Activated B cell treated with CpG ODN at 0.5 μM for 24 hours (primary cell): ENCODE measurements at regions of chr3 and their contacts with region 1.

Region 1: DNA sequence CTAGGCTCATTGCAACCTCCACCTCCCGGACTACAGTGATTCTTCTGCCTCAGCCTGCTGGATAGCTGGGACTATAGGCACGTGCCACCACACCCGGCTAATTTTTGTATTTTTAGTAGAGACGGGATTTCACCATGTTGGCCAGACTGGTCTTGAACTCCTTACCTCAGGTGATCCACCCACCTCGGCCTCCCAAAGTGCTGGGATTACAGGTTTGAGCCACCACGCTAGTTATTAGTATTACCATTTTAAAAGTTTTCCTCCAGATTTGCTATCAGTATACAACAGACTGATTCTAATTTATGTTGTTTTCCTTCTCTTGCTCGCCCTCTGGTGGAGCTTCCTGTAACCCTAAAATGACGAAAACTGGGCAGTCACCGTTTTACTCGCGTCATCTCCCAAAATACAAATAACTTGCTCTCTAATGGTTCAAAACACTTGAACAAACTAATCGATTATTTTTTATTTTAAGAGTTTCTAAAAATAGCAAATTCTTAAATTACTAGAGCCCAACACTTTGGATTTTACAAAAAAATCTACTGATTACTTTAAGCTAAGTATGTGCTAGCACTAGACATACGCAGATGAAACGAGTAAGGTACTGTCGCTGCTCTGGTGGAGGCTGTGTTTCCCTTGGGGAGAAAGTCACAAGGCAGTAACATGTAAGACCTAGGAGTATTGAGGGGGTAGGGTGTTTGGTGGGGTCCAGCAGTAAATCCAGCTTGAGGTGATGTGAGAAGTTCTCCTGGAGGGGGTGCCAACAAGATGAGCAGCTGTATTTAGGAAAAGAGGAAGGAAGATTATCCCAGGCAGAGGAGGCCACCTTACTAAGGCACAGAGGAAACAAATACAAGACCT is 203.3 kb downstream of the MBNL1 start:
- DNase-seq: peak; percentile 31
- ATAC-seq: peak; percentile 82
- H3K4me3 Mint-ChIP-seq: peak overlapping the region; percentile 78
- H3K27ac Mint-ChIP-seq: peak overlapping the region; percentile 65
- H3K4me1 Mint-ChIP-seq: peaks cover 26% of the 10 kb centered on the region
- H3K27me3 Mint-ChIP-seq: no peaks in the 10 kb centered on the region
- CTCF ChIP-seq: peak; percentile 17

Region 2: DNA sequence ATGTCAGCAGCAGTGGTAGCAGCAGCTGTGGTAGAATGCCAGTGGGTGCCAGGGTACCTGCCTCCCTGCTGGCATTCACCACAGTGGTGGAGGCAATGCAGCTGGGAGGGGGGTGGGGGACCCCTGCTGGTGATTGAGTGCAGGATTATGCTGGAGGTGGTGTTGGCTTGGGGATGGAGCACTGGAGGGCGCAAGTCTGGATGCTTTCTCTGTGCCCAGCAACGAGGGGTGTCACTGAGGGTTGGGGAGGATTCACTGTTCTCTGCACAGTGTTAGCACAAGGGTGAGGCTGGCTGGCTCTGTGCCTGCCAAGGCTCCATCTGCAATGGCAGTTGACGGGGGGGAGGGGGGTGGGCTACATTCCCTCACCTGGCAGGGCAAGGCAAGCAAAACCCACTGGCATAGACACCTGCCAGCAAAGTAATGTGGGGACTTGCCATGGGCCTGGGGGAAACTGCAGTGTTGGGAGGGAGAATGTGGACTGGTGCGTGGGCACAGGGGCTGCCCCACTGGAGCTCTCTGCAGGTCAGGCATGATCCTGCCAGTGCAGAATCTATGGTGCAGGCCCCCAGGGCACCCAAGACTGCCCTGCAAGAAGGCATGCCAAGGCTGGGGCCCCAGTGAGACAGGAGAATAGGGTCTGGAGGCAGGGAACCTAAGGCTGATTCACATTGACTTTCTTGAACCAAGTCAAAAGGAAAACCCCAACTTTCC is 1631.1 kb before region 1 on chr3:
- CTCF ChIA-PET with region 1: no interaction called
- POLR2A ChIA-PET with region 1: no interaction called
- intact Hi-C with region 1: no loop called
- DNase-seq: no peak
- ATAC-seq: no peak
- H3K4me3 Mint-ChIP-seq: no peak overlapping the region
- H3K27ac Mint-ChIP-seq: no peak overlapping the region
- H3K4me1 Mint-ChIP-seq: no peaks in the 10 kb centered on the region
- H3K27me3 Mint-ChIP-seq: peaks cover 17% of the 10 kb centered on the region
- CTCF ChIP-seq: no peak

Region 3: GRCh38 chr3:151439652-151440129 is 1032.4 kb before region 1 on chr3:
- CTCF ChIA-PET with region 1: interaction called, 3 read pairs
- POLR2A ChIA-PET with region 1: no interaction called
- intact Hi-C with region 1: loop called (anchors 5 kb)
- DNase-seq: no peak
- ATAC-seq: peak; percentile 81
- H3K4me3 Mint-ChIP-seq: no peak overlapping the region
- H3K27ac Mint-ChIP-seq: no peak overlapping the region
- H3K4me1 Mint-ChIP-seq: peaks cover 3% of the 10 kb centered on the region
- H3K27me3 Mint-ChIP-seq: no peaks in the 10 kb centered on the region
- CTCF ChIP-seq: no peak

Region 4: DNA sequence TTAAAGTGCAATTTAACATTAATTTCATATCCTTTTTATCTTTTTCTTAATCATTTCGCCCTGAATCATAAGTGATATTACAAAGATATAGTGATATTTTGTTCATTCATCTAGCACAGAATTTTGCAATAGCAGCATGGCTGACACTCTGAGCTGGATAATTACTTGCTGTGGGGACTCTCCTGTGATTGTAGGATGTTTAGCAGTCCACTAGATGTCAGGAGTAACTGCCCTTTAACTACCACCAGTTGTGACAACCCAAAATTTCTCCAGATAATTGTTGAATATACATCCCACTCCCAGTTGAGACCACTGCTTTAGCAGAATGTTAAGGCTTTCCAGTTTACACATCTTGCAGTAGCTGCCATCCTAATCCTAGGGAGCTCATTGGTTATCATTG is 400.1 kb before region 1 on chr3:
- CTCF ChIA-PET with region 1: interaction called, 13 read pairs
- POLR2A ChIA-PET with region 1: no interaction called
- intact Hi-C with region 1: loop called (anchors 1 kb)
- DNase-seq: no peak
- ATAC-seq: peak; percentile 66
- H3K4me3 Mint-ChIP-seq: no peak overlapping the region
- H3K27ac Mint-ChIP-seq: no peak overlapping the region
- H3K4me1 Mint-ChIP-seq: no peaks in the 10 kb centered on the region
- H3K27me3 Mint-ChIP-seq: no peaks in the 10 kb centered on the region
- CTCF ChIP-seq: no peak

Region 5: DNA sequence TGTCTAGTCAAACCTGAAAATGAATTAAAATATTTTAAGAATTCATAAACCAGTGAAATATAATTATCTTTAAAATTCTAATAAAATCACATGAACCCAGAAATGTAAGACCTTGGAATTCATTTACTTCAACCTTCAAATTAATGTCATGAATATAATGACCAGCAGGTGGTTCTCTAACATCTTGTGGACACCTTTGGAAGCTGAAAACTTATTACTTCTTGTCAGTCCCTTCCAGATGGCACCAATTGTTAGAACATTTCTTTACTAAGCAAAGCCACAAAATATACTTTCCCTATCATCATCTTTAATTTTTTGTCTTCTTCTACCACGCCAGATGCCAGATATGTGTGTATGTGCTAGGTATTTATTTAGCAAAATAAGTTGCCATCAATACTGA is 36.7 kb after region 1 on chr3:
- CTCF ChIA-PET with region 1: interaction called, 13 read pairs
- POLR2A ChIA-PET with region 1: interaction called, 5 read pairs
- intact Hi-C with region 1: loop called (anchors 1 kb)
- DNase-seq: no peak
- ATAC-seq: no peak
- H3K4me3 Mint-ChIP-seq: peak overlapping the region; percentile 6
- H3K27ac Mint-ChIP-seq: peak overlapping the region; percentile 82
- H3K4me1 Mint-ChIP-seq: peaks cover 88% of the 10 kb centered on the region
- H3K27me3 Mint-ChIP-seq: no peaks in the 10 kb centered on the region
- CTCF ChIP-seq: no peak

Region 6: DNA sequence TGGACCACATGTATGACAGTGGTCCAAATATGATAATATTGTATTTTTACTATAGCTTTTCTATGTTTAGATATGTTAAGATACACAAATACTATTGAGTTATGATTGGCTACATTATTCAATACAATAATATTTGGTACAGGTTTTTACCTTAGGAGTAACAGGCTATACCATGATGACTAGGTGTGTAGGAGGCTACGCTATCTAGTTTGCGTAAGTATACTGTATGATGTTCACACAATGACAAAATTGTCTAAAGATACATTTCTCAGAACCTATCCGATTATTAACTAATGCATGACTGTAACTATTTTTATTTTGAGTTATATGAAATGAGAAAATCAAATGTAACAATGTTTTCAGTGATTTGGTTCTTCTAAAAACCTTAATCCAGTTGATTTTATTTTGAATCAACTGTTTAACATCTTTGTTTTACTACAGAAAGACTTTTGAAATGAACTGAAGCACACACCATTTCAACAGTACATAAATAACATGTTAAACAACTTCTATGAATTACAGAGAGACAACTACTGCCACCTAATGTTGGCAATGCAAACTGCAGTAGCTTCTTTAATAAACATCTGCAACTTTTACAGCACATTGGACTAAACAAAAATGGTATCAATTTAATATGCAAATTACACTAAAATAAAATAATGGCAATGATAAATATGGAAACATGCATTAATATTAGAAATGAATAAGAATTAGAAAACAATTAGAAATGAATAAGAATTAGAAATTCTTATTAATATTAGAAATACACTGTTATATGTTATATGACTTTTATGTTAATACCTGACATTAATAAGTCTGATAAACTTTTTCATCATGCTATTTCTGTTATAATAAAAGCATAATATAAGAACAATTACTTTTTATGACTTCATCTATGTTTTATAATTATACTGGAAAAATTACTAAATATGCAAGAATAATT is 52.4 kb after region 1 on chr3:
- CTCF ChIA-PET with region 1: interaction called, 106 read pairs
- POLR2A ChIA-PET with region 1: interaction called, 6 read pairs
- intact Hi-C with region 1: loop called (anchors 1 kb)
- DNase-seq: no peak
- ATAC-seq: peak; percentile 77
- H3K4me3 Mint-ChIP-seq: no peak overlapping the region
- H3K27ac Mint-ChIP-seq: no peak overlapping the region
- H3K4me1 Mint-ChIP-seq: peaks cover 33% of the 10 kb centered on the region
- H3K27me3 Mint-ChIP-seq: no peaks in the 10 kb centered on the region
- CTCF ChIP-seq: peak; percentile 96

Region 7: GRCh38 chr3:152621006-152621868 is 149.2 kb after region 1 on chr3:
- CTCF ChIA-PET with region 1: no interaction called
- POLR2A ChIA-PET with region 1: no interaction called
- intact Hi-C with region 1: no loop called
- DNase-seq: no peak
- ATAC-seq: no peak
- H3K4me3 Mint-ChIP-seq: no peak overlapping the region
- H3K27ac Mint-ChIP-seq: no peak overlapping the region
- H3K4me1 Mint-ChIP-seq: no peaks in the 10 kb centered on the region
- H3K27me3 Mint-ChIP-seq: peaks cover 4% of the 10 kb centered on the region
- CTCF ChIP-seq: no peak

Region 8: DNA sequence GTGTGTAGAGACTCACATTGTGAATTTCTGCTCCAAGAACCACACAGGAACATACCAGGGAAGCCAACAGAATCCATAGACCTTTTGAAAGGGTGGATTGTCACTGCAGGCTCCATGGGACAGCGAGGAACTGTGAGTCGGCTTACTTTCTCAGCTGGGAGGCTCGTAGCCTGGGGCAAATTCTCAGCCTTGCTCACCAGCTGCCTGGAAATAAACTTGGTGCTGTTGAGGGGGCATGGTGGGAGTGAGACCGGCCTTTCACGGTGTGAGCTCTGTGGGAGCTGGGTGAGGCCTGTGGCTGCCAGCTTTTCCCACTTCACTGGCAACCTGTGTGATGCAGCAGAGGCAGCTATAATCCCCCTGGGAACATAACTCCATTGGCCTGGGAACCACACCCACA is 216.3 kb after region 1 on chr3:
- CTCF ChIA-PET with region 1: no interaction called
- POLR2A ChIA-PET with region 1: no interaction called
- intact Hi-C with region 1: loop called (anchors 5 kb)
- DNase-seq: no peak
- ATAC-seq: no peak
- H3K4me3 Mint-ChIP-seq: no peak overlapping the region
- H3K27ac Mint-ChIP-seq: no peak overlapping the region
- H3K4me1 Mint-ChIP-seq: no peaks in the 10 kb centered on the region
- H3K27me3 Mint-ChIP-seq: peaks cover 14% of the 10 kb centered on the region
- CTCF ChIP-seq: no peak

Region 9: GRCh38 chr3:152737021-152737908 is 265.2 kb after region 1 on chr3:
- CTCF ChIA-PET with region 1: no interaction called
- POLR2A ChIA-PET with region 1: no interaction called
- intact Hi-C with region 1: no loop called
- DNase-seq: no peak
- ATAC-seq: no peak
- H3K4me3 Mint-ChIP-seq: no peak overlapping the region
- H3K27ac Mint-ChIP-seq: no peak overlapping the region
- H3K4me1 Mint-ChIP-seq: no peaks in the 10 kb centered on the region
- H3K27me3 Mint-ChIP-seq: peaks cover 3% of the 10 kb centered on the region
- CTCF ChIP-seq: no peak

Region 10: DNA sequence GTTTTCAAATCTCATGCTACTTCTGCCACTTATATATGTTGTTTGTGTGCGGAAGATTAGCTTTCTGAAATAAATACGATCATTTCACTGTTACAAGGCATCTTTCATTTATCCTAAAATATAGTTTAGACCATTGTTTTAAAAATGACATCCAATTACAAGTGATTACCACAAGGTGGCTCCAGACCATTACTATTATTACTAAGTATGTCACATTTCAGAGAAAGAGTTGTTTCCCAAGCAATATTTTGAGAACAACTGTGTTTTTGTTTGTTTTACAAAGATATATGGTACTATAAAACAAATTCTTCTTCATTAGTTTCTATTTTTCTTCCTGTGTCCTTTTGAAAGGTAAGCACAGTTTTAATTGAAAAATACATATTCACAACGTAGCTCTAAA is 554.0 kb after region 1 on chr3:
- CTCF ChIA-PET with region 1: no interaction called
- POLR2A ChIA-PET with region 1: no interaction called
- intact Hi-C with region 1: loop called (anchors 5 kb)
- DNase-seq: no peak
- ATAC-seq: no peak
- H3K4me3 Mint-ChIP-seq: no peak overlapping the region
- H3K27ac Mint-ChIP-seq: no peak overlapping the region
- H3K4me1 Mint-ChIP-seq: no peaks in the 10 kb centered on the region
- H3K27me3 Mint-ChIP-seq: no peaks in the 10 kb centered on the region
- CTCF ChIP-seq: no peak